Heart right ventricle (tissue), 16 donors: ENCODE measurements at regions of chr2 and their contacts with region 1.

Region 1: GRCh38 chr2:154740361-154740760 is 41.9 kb downstream of the KCNJ3 start:
- DNase-seq: no peak
- ATAC-seq: no peak
- H3K4me3 ChIP-seq: no peak overlapping the region
- H3K27ac ChIP-seq: no peak overlapping the region
- H3K4me1 ChIP-seq: no peaks in the 10 kb centered on the region
- H3K27me3 ChIP-seq: no peaks in the 10 kb centered on the region
- CTCF ChIP-seq: no peak

Region 2: DNA sequence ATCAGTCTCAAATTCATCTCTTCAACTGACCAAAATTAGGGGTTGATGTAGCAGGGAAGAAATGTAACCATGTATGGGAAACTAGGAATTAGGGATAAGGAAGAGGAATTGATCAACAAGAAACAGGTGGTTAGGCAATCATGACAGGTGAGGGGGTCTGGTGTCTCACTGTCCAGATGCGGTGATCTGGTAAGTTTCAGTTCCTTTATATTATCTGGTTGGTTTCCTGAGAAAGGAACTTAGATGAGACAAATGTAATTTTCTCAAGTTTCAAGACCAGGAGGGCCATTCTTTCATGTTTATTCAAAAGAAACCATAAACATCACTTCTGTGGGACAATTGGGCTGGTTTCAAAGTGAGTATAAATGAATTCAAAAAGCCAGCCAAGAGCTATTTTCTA is 348.1 kb before region 1 on chr2:
- intact Hi-C with region 1: no loop called
- DNase-seq: no peak
- ATAC-seq: no peak
- H3K4me3 ChIP-seq: no peak overlapping the region
- H3K27ac ChIP-seq: no peak overlapping the region
- H3K4me1 ChIP-seq: no peaks in the 10 kb centered on the region
- H3K27me3 ChIP-seq: no peaks in the 10 kb centered on the region
- CTCF ChIP-seq: no peak

Region 3: GRCh38 chr2:154776825-154777224 is 36.5 kb after region 1 on chr2:
- intact Hi-C with region 1: no loop called
- DNase-seq: no peak
- ATAC-seq: no peak
- H3K4me3 ChIP-seq: no peak overlapping the region
- H3K27ac ChIP-seq: no peak overlapping the region
- H3K4me1 ChIP-seq: no peaks in the 10 kb centered on the region
- H3K27me3 ChIP-seq: no peaks in the 10 kb centered on the region
- CTCF ChIP-seq: no peak

Region 4: DNA sequence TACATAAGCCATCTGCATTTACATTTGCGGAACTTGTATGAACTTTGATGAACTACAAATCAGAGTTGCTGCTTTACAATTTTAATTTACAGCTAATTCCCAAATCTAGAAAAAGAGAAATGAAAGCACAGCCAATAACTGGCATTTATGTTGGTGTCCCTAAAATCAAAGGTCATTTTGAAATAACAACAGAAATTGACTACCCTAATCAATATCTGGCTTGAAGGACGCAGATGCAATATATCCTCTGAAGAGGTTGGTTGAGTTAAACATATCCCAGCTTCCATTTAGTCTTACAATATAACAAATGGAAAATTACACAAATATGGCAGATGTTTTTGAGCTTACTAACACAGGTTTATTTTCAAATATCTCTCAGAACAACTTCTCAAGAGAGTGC is 135.6 kb after region 1 on chr2:
- intact Hi-C with region 1: no loop called
- DNase-seq: no peak
- ATAC-seq: no peak
- H3K4me3 ChIP-seq: no peak overlapping the region
- H3K27ac ChIP-seq: no peak overlapping the region
- H3K4me1 ChIP-seq: no peaks in the 10 kb centered on the region
- H3K27me3 ChIP-seq: no peaks in the 10 kb centered on the region
- CTCF ChIP-seq: no peak

Region 5: DNA sequence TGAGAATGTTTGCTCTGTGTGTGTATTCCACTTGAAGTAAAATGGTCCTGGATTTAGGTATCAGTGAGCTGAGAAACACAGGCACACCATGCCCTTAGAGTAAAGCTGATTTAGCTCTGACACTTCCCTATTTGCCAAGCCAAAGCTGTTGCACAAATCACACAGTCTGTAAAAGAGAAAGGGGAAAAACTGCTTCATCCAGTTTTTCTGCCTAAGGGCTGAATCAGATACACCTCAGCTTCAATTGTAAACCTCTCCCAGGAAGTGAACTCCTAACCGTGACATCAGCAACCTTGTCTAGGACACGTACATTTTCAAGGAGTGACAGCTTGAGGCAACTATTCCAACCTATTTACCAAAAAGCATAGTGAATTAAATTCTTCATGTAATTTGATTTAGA is 1441.8 kb after region 1 on chr2:
- intact Hi-C with region 1: loop called in 1 of 10 experiments (anchors 10 kb)
- DNase-seq: no peak
- ATAC-seq: no peak
- H3K4me3 ChIP-seq: no peak overlapping the region
- H3K27ac ChIP-seq: no peak overlapping the region
- H3K4me1 ChIP-seq: no peaks in the 10 kb centered on the region
- H3K27me3 ChIP-seq: peaks cover 0 to 5% (median 0%) of the 10 kb centered on the region in 7 donors
- CTCF ChIP-seq: no peak